Tibial artery (tissue), 4 donors: ENCODE measurements at regions of chr9 and their contacts with region 1.

Region 1: GRCh38 chr9:37800631-37801286 is at the start of gene DCAF10:
- DNase-seq: peak; percentile 79 to 90
- H3K4me3 ChIP-seq: peak within 1 kb of the TSS; percentile 72 to 87
- H3K27ac ChIP-seq: peak within 1 kb of the TSS; percentile 87 to 90
- H3K4me1 ChIP-seq: peaks cover 0 to 39% (median 25%) of the 10 kb centered on the region in 4 donors
- H3K27me3 ChIP-seq: no peaks in the 10 kb centered on the region
- CTCF ChIP-seq: no peak

Region 2: DNA sequence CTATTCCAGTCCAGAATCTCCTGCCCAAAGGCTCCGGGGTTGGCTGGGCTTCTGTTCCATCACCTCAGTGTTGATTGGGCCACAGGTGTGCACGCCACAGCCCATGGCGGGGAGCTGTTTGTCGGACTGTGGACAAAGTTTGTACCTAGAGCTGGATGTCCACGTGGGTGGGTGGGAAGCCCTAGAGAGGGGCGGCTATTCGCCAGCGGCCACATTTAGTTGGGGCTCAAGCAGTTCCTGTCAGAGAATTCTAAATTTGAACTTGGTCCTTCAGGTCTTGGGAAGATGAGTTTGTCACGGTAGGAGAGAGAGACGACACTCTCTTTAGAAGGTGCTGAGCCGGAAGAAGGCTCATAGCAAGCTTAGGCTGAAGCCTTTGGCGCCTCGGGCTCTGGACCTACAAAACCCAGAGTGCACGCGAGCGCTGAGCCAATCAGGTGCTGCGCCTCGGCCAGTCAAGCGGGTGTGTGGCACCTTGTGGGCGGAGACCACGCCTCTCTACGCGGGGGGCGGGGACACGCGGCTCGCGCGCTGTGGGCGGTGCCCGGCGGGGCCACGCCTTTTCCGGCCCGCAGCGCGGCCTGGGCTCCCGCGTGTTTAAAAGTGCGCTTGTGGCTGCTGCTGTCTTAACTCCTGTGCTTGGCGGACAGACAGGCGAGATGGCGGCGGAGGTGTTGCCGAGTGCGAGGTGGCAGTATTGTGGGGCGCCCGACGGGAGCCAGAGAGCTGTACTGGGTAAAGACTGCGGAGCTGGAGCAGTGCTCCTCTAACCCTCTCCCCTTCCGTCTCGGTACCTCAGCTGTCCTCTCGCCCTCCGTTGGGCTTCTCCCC is 315.2 kb before region 1 on chr9 and contains the start of gene POLR1E:
- intact Hi-C with region 1: loop called (anchors 5 kb)
- DNase-seq: peak; percentile 92 to 96
- H3K4me3 ChIP-seq: peak within 1 kb of the TSS; percentile 70 to 80
- H3K27ac ChIP-seq: peak within 1 kb of the TSS; percentile 86 to 91
- H3K4me1 ChIP-seq: peaks cover 5 to 29% (median 27%) of the 10 kb centered on the region in 4 donors
- H3K27me3 ChIP-seq: no peaks in the 10 kb centered on the region
- CTCF ChIP-seq: no peak

Region 3: DNA sequence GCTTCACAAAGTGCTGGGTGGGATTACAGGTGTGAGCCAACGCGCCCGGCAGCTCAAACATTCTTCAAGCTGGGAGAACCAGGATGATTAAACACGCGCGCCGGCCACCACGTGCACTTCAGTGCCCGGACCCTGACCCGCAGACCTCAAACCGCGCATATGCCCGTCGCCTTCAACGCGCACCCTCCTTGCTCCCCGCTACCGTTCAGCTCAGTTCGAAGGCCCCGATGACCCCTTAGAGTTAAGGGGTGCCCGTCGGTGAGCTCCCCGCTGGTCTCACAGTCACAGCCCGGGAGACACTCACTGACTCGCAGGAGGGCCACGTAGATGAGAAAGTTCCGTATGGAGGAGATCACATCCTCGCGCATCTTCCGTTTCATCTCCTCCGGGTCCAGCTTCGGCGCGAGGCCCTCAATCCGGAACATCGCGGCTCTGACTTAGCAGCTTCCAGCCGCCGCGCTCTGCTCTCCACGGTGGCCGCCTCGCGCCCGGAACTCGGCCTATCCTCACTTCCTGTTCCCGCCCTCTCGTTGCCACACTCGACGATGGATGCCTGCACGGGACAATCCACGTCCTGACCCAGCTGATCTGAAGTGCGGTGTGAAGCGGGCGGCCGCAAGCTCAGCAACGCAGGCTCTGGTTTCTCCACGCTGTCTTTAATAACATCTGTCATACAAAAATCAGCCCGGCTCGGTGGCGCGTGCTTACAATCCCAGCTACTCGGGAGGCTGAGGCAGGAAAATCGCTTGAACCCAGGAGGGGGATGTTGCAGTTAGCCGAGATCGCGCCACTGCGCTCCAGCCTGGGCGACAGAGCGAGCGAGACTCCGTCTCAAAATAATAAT is 208.4 kb before region 1 on chr9 and contains the start of gene TOMM5:
- intact Hi-C with region 1: loop called (anchors 5 kb)
- DNase-seq: peak; percentile 93 to 95
- H3K4me3 ChIP-seq: peak within 1 kb of the TSS; percentile 82 to 86
- H3K27ac ChIP-seq: peak within 1 kb of the TSS; percentile 80 to 81
- H3K4me1 ChIP-seq: peaks cover 0 to 25% (median 16%) of the 10 kb centered on the region in 4 donors
- H3K27me3 ChIP-seq: no peaks in the 10 kb centered on the region
- CTCF ChIP-seq: no peak

Region 4: DNA sequence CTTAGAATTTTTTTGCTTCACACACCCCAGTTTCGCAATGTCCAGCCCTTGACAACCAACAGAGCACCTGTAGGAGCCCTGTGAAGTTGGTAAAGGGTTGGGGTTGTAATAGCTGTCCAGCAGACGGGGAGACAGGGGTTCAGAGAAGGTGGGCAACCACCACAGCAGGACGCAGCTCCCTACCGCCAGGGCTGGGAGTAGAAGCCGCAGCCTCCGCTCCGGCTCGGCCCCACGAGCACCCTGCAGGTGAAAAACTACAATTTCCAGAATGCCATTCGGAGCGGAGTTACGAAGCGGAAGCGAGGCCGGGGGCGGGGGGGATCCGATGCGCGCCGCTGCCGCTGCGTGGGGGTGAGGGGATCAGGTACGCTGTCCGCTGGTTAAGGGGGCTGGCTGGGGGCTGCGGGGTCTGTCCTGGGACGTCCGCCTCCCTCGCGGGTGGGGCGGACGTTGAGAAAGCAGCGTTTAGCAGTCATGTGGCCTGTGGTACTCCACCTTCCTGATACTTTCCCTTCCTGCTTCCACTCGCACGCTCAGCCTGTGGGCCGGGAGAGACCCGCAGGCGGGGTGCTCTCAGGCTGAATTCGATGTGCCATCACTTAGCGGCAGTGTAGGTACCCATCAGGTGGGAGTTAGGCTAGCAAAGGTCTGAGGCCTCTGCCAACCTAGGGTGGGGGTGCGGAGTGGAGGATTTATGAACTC is 47.1 kb before region 1 on chr9 and contains the start of gene TRMT10B:
- intact Hi-C with region 1: loop called (anchors 5 kb)
- DNase-seq: peak; percentile 48 to 76
- H3K4me3 ChIP-seq: peak within 1 kb of the TSS; percentile 67 to 79
- H3K27ac ChIP-seq: peak within 1 kb of the TSS; percentile 80 to 87
- H3K4me1 ChIP-seq: peaks cover 0 to 14% (median 9%) of the 10 kb centered on the region in 4 donors
- H3K27me3 ChIP-seq: no peaks in the 10 kb centered on the region
- CTCF ChIP-seq: no peak